ENCODE measurements at regions of chr4 and their contacts with region 1.

Region 1: DNA sequence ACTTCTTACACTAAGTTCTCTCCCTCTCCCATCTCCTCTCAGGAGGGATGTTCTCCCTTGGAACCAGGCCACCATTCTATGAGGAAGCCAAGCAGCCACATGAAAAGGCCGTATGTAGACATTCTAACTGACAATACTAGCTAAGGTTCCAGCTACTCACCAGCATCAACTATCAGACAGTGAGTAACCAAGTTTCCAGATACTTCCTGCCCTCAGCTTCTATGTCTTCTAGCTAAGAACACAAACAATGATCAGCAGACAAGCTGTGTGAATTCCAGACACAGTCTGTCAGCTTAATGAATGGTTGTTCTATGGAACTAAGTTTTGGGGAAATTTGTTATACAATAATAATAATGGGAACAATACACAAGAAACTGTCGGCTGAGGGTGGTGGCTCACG is 50.8 kb downstream of the SMIM14 start:
- DNase-seq: no peak
- ATAC-seq: no peak
- H3K4me3 ChIP-seq: no peak overlapping the region
- H3K27ac ChIP-seq: no peak overlapping the region
- H3K4me1 ChIP-seq: no peaks in the 10 kb centered on the region
- H3K27me3 ChIP-seq: no peaks in the 10 kb centered on the region
- CTCF ChIP-seq: no peak
- EP300 ChIP-seq: no peak
- POLR2A ChIP-seq: no peak
- RAD21 ChIP-seq: no peak

Region 2: DNA sequence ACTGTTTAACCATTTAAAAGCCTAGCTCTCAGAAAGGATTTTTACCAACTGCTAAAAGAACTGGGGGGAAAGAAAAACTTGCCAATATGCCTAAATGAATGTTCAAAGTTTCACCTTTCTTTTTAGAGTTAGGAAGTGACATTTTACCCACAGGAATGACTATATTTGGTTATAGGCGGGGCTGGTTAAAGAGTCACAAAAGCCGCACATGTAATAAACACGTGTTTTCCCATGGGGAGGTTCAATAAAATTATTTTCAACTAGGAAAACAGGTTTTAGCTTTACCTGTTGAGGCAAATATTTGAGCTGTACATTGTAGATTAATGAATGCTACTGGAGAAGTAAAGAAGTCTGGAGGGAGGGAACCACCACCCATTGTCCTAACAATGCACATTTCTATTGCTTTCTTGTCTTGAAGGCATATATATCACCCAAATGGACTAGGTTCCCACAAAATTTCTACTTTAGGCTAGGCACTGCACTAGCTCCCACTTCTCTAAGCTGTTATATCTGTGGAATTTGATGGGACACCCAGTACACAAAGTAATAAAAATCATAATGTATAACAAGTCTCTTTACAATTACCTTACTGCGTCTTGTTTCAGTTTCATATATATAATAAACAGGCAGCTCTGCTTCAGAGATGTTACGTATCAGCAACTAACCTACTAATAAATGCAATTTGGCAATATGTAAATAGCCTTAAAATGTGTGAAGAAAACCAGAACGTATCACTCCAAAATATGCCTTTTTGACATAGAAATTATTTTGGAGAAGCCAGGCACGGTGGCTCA is 18.9 kb before region 1 on chr4:
- CTCF ChIA-PET with region 1: interaction called, 3 read pairs
- POLR2A ChIA-PET with region 1: no interaction called
- RAD21 ChIA-PET with region 1: no interaction called
- SMC1A ChIA-PET with region 1: interaction called, 10 read pairs
- in situ Hi-C with region 1: no loop called
- intact Hi-C with region 1: no loop called
- DNase-seq: peak; percentile 31
- ATAC-seq: peak; percentile 88
- H3K4me3 ChIP-seq: peak overlapping the region; percentile 8; the same call in 1 of the 2 replicates
- H3K27ac ChIP-seq: peak overlapping the region; percentile 82
- H3K4me1 ChIP-seq: peaks cover 7% of the 10 kb centered on the region
- H3K27me3 ChIP-seq: no peaks in the 10 kb centered on the region
- CTCF ChIP-seq: no peak
- EP300 ChIP-seq: no peak
- POLR2A ChIP-seq: no peak
- RAD21 ChIP-seq: no peak